Dorsolateral prefrontal cortex (tissue), 120 donors: ENCODE measurements at regions of chr17 and their contacts with region 1.

Region 1: DNA sequence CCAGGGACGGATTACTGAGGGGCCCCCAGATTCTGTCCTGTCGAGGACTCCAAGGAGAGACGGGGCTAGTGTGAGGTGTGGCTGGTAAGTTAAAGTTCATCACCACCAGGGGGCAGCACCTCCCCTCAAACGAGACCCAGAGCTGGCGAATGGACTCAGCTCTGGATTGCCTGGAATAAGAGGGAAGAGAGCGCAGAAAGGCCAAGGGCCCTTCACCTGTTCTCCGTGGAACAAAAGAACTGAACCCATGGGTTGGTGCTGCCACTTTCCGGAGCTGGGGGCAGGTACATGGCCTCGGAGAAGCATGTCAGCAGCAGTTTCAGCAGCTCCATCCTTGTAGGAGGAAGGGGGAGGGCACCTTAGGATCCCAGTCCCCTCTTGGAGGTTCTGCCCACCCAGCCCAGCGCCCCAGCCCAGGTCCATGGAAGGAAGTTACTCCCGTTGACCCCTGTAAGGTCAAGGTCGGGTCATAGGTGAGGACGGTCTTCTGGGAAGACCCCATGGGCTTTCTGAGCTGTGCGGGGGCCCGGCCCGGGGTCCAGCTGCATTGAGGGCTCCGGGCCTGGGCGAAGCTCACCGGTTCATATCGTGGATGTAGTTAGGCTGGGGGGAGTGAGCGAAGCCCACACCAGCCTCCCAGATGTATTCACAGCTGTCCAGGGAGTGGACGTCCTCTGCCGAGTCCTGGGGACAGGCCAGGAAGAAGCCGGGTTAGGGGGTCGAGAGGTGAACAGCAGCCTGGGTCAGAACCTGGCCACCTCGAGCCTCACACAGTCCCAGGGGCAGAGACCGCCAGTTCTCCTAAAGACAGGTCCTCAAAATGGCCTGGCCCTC is 10.7 kb downstream of the HID1 start:
- DNase-seq: peak; percentile 82 to 94 (median 90)
- H3K4me3 ChIP-seq: peak overlapping the region in 10 of 59 donors; percentile 0 to 17 (median 12)
- H3K27ac ChIP-seq: peak overlapping the region; percentile 65 to 99 (median 94)
- H3K27me3 ChIP-seq: no peaks in the 10 kb centered on the region
- CTCF ChIP-seq: peak; percentile 63 to 96 (median 89)

Region 2: DNA sequence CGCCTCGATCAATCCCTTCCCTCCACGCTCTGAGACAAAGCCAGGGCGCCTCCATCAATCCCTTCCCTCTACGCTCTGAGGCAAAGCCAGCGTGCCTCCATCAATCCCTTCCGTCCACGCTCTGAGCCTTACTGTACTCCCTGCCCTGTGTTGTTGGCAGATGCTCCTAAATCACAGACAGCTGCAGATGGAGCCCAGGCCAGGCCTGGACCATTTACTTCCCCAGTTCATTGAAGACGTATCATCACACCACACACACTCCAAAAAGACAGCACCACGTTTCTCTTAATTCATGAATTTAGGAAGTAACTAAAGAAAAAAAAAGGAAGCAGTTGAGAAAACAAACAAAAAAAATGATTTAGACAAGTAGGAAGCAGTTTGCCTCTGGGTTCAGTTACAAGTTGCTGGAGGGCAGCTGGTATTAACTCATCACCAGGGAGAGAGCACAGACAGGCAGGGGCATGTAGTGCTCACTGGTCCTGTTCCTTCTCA is 362.4 kb before region 1 on chr17:
- intact Hi-C with region 1: no loop called
- DNase-seq: peak in 1 of 10 donors; percentile 29
- H3K4me3 ChIP-seq: no peak overlapping the region
- H3K27ac ChIP-seq: no peak overlapping the region
- H3K27me3 ChIP-seq: peaks cover 0 to 9% (median 0%) of the 10 kb centered on the region in 45 donors
- CTCF ChIP-seq: no peak

Region 3: GRCh38 chr17:74923533-74924249 is 38.2 kb before region 1 on chr17:
- intact Hi-C with region 1: loop called in 1 of 2 experiments (anchors 2 kb)
- DNase-seq: peak in 8 of 10 donors; percentile 35 to 75 (median 46)
- H3K4me3 ChIP-seq: peak overlapping the region in 57 of 59 donors; percentile 5 to 58 (median 39)
- H3K27ac ChIP-seq: no peak overlapping the region
- H3K27me3 ChIP-seq: peaks cover 6 to 69% (median 38%) of the 10 kb centered on the region in 45 donors
- CTCF ChIP-seq: peak; percentile 40 to 86 (median 73)

Region 4: GRCh38 chr17:75012346-75013091 is 50.6 kb after region 1 on chr17 and contains the start of gene MRPL58:
- intact Hi-C with region 1: loop called in 1 of 2 experiments (anchors 2 kb)
- DNase-seq: peak; percentile 72 to 91 (median 86)
- H3K4me3 ChIP-seq: peak within 1 kb of the TSS; percentile 63 to 95 (median 86)
- H3K27ac ChIP-seq: peak within 1 kb of the TSS; percentile 67 to 98 (median 92)
- H3K27me3 ChIP-seq: no peaks in the 10 kb centered on the region
- CTCF ChIP-seq: peak in 55 of 56 donors; percentile 17 to 76 (median 60)
- total RNA-seq, gene MRPL58: 11.3 to 30.9 (median 21.5) TPM

Region 5: GRCh38 chr17:75109407-75110233 is 147.7 kb after region 1 on chr17 and contains the start of gene ARMC7:
- intact Hi-C with region 1: loop called in 1 of 2 experiments (anchors 2 kb)
- DNase-seq: peak; percentile 80 to 95 (median 88)
- H3K4me3 ChIP-seq: peak within 1 kb of the TSS; percentile 66 to 98 (median 88)
- H3K27ac ChIP-seq: peak within 1 kb of the TSS in 54 of 59 donors; percentile 5 to 89 (median 76)
- H3K27me3 ChIP-seq: no peaks in the 10 kb centered on the region
- CTCF ChIP-seq: peak in 36 of 56 donors; percentile 5 to 67 (median 34)
- total RNA-seq, gene ARMC7: 7.0 to 16.8 (median 11.3) TPM